ENCODE measurements at regions of chr11 and their contacts with region 1.

Region 1: DNA sequence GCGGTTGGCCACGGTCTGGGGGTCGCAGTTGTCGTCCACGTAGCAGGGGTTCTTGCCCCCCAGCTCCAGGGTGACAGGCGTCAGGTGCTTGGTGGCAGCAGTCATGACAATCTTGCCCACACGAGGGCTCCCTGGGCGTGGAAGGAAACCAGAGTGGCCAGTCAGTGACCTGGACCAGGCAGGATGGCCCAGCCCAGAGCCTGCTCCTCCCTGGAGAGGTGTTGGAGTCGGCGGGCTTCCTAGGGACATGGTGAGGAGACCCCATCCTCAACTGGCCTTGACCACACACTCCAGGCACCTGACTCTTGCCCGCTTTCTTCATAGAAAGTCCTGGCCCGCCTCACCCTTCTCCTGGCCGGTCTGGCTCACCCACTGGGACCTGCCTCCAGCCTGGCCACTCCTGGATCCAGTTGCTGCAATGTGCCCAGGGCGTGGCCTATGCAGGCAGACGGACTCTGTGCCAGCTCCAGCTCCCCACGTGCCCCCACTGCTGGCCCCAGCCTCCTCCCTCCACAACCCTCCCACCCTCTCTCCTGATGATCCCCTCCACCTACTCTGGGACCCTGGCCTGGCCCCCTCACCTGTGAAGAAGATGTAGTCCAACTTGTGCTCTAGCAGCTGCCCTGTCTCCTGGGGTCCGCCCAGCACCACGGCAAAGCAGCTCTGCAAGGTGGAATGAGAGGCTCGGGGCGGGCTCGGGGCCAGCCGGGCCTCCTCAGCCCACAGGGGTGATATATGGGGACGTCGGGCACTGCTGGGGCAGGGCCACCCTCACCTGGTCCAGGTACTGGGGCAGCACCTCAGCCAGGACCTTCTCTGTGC is 8.7 kb downstream of the ALDH3B2 start:
- DNase-seq: no peak
- ATAC-seq: no peak

Region 2: DNA sequence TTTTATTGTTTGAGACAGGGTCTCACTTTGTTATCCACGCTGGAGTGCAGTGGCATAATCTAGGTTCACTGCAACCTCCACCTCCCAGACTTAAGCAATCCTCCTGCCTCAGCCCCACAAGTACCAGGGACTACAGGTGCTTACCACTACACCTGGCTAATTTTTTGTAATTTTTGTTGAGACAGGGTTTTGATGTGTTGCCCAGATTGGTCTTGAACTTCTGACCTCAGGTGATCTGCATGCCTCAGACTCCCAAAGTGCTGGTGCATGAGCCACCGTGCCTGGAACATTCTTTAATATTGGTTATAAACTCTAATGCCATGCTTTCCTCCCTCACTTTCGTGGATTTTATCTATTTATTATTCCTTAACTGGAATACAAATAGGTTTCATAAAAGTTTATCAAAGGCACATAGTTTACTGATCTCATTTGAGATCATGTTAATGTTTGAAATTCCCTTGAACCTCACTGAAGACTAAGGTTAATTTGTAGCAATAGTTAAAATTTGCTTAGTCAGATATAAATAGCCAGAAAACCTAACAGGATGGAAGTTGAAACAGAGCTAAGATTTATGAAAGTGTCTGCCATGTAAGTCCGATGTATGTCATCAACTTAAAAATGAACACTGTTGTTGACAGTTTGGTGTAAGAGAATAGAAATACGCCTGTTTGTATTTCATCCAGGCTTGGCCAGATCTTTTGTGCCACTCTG is 519.1 kb before region 1 on chr11:
- intact Hi-C with region 1: no loop called
- DNase-seq: no peak
- ATAC-seq: no peak

Region 3: GRCh38 chr11:67691149-67691548 is 25.4 kb after region 1 on chr11:
- intact Hi-C with region 1: no loop called
- DNase-seq: no peak
- ATAC-seq: no peak

Region 4: GRCh38 chr11:67745176-67745726 is 79.5 kb after region 1 on chr11:
- intact Hi-C with region 1: no loop called
- DNase-seq: no peak
- ATAC-seq: no peak

Region 5: GRCh38 chr11:67776852-67777520 is 111.2 kb after region 1 on chr11:
- intact Hi-C with region 1: loop called (anchors 5 kb)
- DNase-seq: no peak
- ATAC-seq: no peak

Measured in sciatic nerve (tissue), 2 donors.